Naive thymus-derived CD8-positive, alpha-beta T cell (primary cell): ENCODE measurements at regions of chr6 and their contacts with region 1.

Region 1: DNA sequence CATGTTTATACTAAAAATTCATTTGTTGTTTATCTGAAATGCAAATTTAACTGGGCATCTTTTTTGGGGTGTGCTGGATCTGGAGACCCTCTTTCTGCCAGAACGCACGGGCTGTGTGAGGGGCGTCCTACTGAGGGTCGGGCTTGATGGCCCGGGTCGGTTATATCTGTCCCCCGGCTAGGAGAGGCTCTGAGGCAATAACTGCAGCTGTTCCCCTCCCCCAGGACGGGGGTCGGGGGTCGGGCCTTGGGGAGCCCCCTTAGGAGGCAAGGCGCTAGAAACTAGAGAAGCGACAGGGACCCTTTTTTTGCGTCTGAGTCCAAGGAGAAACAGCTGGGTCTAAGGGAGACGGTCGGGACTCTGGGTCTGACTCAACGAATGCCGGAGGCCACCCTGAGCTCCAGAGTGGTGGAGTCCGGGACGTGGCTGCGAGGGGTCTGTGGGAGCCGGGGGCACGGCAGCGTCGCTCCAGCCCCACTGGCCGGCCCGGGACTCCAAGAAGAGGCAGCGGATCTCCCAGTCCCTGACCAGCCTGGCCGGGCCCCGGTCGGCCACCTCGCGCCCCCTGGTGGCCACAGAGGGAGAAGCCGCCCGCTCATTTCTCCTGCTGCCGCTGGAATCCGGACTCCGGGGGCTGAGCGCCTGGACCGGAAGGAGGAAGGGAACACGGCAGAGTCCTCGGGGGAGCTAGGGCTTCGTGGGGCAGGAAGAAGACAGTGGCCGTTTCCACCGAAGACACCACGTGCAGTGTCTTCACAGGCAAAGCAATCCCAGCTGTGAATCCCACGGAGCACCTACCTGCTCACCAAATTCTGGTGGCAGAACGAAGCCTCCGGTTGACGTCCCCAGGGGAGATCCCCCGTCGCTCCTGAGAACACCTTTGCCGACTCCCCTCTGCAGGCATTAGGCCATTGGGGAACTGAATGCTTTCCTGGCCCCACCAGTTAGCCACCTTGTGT is 24.0 kb upstream of the SCML4 start:
- DNase-seq: peak; percentile 59 to 91 (median 79)
- ATAC-seq: peak; percentile 85 to 86
- H3K4me3 Mint-ChIP-seq: peak overlapping the region; percentile 77 to 93 (median 86)
- H3K27ac Mint-ChIP-seq: peak overlapping the region; percentile 81 to 95 (median 92)
- H3K4me1 Mint-ChIP-seq: peaks cover 11 to 32% (median 22%) of the 10 kb centered on the region in 4 donors
- H3K27me3 Mint-ChIP-seq: no peaks in the 10 kb centered on the region

Region 2: DNA sequence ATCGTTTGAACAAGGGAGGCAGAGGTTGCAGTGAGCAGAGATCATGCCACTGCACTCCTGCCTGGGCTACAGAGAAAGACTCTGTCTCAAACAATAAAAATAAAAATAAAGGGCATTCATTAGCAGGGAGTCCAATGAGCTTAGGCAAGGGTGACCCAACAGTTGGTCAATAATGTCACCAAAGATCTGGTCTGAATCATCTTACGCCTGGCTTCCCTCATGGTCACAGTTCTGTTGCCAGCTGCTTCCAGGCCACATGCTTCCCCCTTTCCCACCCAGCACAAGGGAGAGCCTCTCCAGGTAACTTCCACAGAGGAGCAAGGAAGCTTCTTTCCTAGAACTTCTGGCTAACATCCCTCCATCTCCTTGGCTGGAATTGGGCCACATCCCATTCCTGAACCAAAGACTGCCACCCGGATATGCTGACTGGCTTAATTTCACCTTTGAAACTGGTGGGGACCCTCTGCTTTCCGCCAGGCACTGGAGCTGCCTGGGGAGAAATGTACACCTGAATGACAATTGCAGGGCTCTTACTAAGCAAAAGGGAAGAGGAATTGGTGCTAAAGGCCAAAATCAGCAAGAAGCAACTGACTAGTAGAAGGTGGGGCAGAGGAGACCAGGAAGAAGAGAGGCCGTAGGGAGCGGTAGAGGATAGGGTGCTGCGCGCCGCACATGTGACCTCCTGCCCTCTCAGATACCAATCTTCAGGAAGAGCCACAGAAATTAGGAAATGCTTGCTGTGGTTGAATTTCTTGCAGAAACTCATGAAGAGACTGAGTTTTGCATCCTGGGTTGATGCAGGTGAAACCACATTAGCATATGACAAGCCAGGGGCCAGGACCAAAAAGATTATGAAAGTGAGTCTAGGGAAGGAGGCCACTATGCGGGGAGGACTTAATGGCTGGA is 15.7 kb before region 1 on chr6:
- POLR2A ChIA-PET with region 1: interaction called, 12 read pairs
- DNase-seq: no peak
- ATAC-seq: peak; percentile 27 to 30
- H3K4me3 Mint-ChIP-seq: peak overlapping the region in 4 of 10 donors; percentile 13 to 52 (median 30)
- H3K27ac Mint-ChIP-seq: peak overlapping the region in 8 of 10 donors; percentile 6 to 83 (median 76)
- H3K4me1 Mint-ChIP-seq: peaks cover 11 to 30% (median 23%) of the 10 kb centered on the region in 4 donors
- H3K27me3 Mint-ChIP-seq: no peaks in the 10 kb centered on the region

Region 3: DNA sequence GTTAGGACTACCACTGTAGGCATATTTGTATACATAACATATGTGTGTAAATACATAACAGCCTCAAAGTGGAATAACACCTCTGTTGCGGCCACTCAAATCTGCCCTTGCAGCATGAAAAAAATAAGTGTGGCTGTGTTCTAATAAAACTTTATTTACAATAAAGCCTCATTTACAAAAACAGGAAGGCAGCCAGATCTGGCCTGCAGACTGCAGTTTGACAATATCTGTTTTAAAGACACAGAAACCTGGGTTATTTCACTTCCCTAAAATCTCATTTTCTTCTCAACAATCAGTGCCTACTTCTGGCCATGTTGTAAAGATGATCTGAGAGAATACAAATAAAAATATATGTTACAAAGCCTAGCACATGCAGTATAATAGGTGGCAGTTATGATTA is 29.8 kb after region 1 on chr6:
- POLR2A ChIA-PET with region 1: no interaction called
- DNase-seq: no peak
- ATAC-seq: no peak
- H3K4me3 Mint-ChIP-seq: no peak overlapping the region
- H3K27ac Mint-ChIP-seq: no peak overlapping the region
- H3K4me1 Mint-ChIP-seq: peaks cover 0 to 7% (median 0%) of the 10 kb centered on the region in 4 donors
- H3K27me3 Mint-ChIP-seq: no peaks in the 10 kb centered on the region

Region 4: GRCh38 chr6:107894821-107895396 is 46.8 kb after region 1 on chr6:
- POLR2A ChIA-PET with region 1: no interaction called
- DNase-seq: no peak
- ATAC-seq: no peak
- H3K4me3 Mint-ChIP-seq: peak overlapping the region in 1 of 10 donors; percentile 29
- H3K27ac Mint-ChIP-seq: peak overlapping the region in 4 of 10 donors; percentile 1 to 70 (median 40)
- H3K4me1 Mint-ChIP-seq: peaks cover 0 to 37% (median 4%) of the 10 kb centered on the region in 4 donors
- H3K27me3 Mint-ChIP-seq: no peaks in the 10 kb centered on the region

Region 5: GRCh38 chr6:107941627-107942026 is 93.5 kb after region 1 on chr6:
- POLR2A ChIA-PET with region 1: no interaction called
- DNase-seq: no peak
- ATAC-seq: no peak
- H3K4me3 Mint-ChIP-seq: no peak overlapping the region
- H3K27ac Mint-ChIP-seq: peak overlapping the region in 2 of 10 donors; percentile 54 to 66
- H3K4me1 Mint-ChIP-seq: peaks cover 22 to 57% (median 50%) of the 10 kb centered on the region in 4 donors
- H3K27me3 Mint-ChIP-seq: no peaks in the 10 kb centered on the region